PC-9 (cell line): ENCODE measurements at regions of chr19 and their contacts with region 1.

Region 1: DNA sequence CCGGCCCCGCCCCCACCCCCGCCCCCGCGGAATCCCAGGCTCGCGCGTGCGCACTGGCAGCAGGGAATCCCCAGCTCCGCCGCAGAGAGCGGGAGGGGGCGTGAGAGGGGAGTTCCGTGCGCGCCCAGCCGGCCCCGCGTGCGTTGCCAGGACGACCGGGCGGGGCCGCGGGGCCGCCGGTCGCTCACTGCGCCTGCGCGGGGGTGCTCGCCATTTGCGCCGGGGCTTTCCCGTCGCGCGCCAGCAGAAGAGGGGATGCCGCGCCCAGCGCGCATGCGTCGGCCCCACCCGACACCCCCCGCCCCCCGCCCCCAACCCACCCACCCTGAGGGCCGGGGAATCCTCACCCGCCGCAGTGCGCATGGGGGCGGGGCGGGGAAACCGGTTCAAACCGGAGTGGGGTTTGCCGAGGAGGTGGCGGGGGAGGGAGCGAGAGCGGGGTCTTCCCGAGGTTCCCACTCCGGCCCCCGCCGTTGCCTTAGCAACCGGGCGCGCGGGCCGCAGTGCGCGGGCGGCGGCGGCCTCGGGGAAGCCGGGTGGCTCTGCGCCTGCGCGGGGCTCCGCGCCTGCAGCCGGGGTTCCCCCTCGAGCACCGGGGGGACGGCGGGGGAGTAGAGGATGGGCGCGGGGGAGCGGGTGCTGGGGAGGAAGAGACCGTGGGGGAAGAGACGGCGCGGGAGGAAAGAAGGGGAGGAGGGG is 15.1 kb downstream of the CCDC124 start:
- DNase-seq: peak; percentile 76 to 95
- H3K4me3 ChIP-seq: peak overlapping the region; percentile 62; the same call in 1 of the 2 replicates
- H3K27ac ChIP-seq: no peak overlapping the region
- H3K4me1 ChIP-seq: peaks cover 26% of the 10 kb centered on the region
- H3K27me3 ChIP-seq: peaks cover 41% of the 10 kb centered on the region
- CTCF ChIP-seq: no peak

Region 2: DNA sequence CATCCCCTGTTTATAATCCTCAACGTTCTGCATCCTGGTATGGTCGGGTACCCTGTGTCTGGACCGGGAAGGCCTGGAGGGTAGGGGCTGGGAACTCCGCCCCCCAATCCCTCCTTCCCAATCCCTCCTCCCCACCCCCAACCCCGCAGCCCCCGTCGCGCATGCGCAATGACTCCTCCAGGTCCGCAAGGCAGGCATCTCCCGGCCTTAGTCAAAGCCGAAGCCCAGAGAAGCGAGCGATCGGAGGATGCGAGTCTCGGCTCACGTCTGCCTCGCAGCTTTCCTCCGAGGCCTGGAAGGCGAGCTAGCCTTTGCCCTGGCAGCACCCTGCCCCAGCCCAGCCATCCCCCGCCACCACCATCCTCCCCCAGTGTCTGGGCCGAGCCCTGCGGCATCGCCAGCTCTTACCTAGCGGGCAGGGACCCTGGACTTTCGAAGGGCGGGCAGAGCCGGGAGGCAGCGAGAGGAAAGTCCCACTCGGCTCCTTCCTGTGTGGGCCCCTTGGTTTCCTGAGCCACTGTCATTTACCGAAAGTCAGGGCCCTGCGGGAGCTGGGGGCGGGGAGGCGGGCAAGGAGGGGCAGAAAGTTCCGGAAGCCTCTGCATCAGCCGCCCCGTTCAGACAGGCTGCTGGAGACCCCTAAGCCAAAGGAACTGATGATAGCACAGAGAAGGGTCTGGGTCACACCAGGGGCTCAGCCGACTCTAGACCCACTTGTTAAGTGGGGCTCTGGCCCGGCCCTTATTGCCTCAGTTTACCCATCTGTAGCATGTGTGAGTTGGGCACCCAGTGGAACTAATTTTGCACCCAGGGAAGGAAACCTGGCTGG is 100.2 kb before region 1 on chr19 and contains the start of gene JAK3:
- CTCF ChIA-PET with region 1: no interaction called
- POLR2A ChIA-PET with region 1: no interaction called
- intact Hi-C with region 1: no loop called
- DNase-seq: no peak
- H3K4me3 ChIP-seq: no peak within 1 kb of the TSS
- H3K27ac ChIP-seq: no peak within 1 kb of the TSS
- H3K4me1 ChIP-seq: peaks cover 24% of the 10 kb centered on the region
- H3K27me3 ChIP-seq: no peaks in the 10 kb centered on the region
- CTCF ChIP-seq: no peak
- total RNA-seq, gene JAK3: 13.5 and 16.2 TPM in 2 replicates

Region 3: DNA sequence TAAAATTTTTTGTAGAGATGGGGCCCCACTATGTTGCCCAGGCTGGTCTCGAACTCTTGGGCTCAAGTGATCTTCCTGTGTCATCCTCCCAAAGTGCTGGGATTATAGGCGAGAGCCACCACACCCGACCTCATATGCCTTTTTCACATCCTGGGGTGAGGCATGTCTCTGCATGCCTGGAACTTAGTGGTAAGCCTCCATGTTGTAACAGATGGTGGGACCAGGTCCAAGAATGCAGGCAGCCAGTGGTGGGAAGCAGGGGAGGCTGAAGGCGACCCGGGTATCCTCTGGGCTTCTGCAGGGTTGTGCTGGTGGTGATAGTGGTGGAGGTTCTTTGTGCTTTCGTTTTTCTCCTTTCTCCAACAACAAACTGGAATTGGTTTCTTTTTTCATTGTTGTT is 45.3 kb before region 1 on chr19:
- CTCF ChIA-PET with region 1: no interaction called
- POLR2A ChIA-PET with region 1: no interaction called
- intact Hi-C with region 1: no loop called
- DNase-seq: no peak
- H3K4me3 ChIP-seq: no peak overlapping the region
- H3K27ac ChIP-seq: no peak overlapping the region
- H3K4me1 ChIP-seq: peaks cover 4% of the 10 kb centered on the region; the same call in 1 of the 2 replicates
- H3K27me3 ChIP-seq: peaks cover 21% of the 10 kb centered on the region; the same call in 1 of the 2 replicates
- CTCF ChIP-seq: no peak

Region 4: GRCh38 chr19:17932485-17933338 is 15.3 kb before region 1 on chr19 and contains the start of gene CCDC124:
- CTCF ChIA-PET with region 1: interaction called, 11 read pairs
- POLR2A ChIA-PET with region 1: no interaction called
- intact Hi-C with region 1: no loop called
- DNase-seq: peak; percentile 85 to 94
- H3K4me3 ChIP-seq: peak within 1 kb of the TSS; percentile 87
- H3K27ac ChIP-seq: peak within 1 kb of the TSS; percentile 86
- H3K4me1 ChIP-seq: peaks cover 12% of the 10 kb centered on the region
- H3K27me3 ChIP-seq: no peaks in the 10 kb centered on the region
- CTCF ChIP-seq: peak; percentile 95
- total RNA-seq, gene CCDC124: 114 and 118 TPM in 2 replicates

Region 5: GRCh38 chr19:18044825-18045304 is 96.9 kb after region 1 on chr19:
- CTCF ChIA-PET with region 1: interaction called, 15 read pairs
- POLR2A ChIA-PET with region 1: no interaction called
- intact Hi-C with region 1: no loop called
- DNase-seq: peak; percentile 54 to 60
- H3K4me3 ChIP-seq: no peak overlapping the region
- H3K27ac ChIP-seq: peak overlapping the region; percentile 54
- H3K4me1 ChIP-seq: peaks cover 14% of the 10 kb centered on the region
- H3K27me3 ChIP-seq: no peaks in the 10 kb centered on the region
- CTCF ChIP-seq: no peak

Region 6: DNA sequence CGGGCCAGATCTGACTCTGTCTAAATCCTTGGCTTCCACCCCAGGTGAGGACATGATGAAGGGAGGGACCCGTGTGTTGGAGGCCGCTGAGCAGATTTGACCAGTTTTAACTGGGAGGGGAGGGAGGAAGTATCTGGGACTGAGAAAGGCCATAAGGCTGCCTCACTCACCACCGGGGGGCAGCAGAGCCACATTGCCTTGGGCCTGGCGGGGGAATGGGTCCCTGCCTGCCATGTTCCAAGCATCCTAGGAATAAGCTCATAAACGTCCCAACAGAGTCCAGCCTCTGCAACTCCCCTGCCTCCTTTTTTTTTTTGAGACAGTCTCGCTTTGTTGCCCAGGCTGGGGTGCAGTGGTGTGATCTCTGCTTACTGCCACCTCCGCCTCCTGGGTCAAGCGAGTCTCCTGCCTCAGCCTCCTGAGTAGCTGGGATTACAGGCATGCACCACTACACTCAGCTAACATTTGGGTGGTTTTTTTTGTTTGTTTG is 165.1 kb after region 1 on chr19:
- CTCF ChIA-PET with region 1: interaction called, 17 read pairs
- POLR2A ChIA-PET with region 1: no interaction called
- intact Hi-C with region 1: no loop called
- DNase-seq: peak; percentile 63 to 82
- H3K4me3 ChIP-seq: no peak overlapping the region
- H3K27ac ChIP-seq: no peak overlapping the region
- H3K4me1 ChIP-seq: peaks cover 17% of the 10 kb centered on the region
- H3K27me3 ChIP-seq: no peaks in the 10 kb centered on the region
- CTCF ChIP-seq: peak; percentile 89